Activated CD4-positive, alpha-beta T cell treated with anti-CD3 and anti-CD28 coated beads for 36 hours (primary cell): ENCODE measurements at regions of chr6 and their contacts with region 1.

Region 1: DNA sequence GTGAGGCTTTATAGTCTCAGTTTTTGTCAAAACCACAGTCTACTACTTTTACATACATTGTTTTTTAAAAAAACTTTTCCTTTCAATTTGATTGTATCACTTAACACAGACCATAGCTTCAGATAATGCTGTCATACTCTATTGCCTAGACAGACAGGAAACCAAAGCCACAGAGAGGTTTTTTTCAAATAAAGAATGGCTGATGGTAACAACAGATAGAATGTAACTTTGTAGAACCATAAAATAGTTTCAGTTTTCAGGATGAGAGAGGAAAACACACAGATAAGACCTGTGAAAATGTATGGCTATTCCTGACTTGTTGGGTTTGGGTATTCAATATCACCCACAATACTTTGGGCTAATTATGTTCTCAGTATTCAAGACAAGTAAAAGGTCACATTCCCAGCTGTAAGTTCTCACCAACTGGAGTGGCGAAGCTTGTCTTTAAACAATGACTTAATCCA is 94.0 kb downstream of the ADGRG6 start:
- DNase-seq: no peak
- ATAC-seq: peak; percentile 97
- H3K4me3 Mint-ChIP-seq: no peak overlapping the region
- H3K27ac Mint-ChIP-seq: peak overlapping the region; percentile 33
- H3K4me1 Mint-ChIP-seq: peaks cover 32% of the 10 kb centered on the region
- H3K27me3 Mint-ChIP-seq: peaks cover 11% of the 10 kb centered on the region

Region 2: GRCh38 chr6:142013286-142013685 is 382.5 kb before region 1 on chr6:
- CTCF ChIA-PET with region 1: no interaction called
- POLR2A ChIA-PET with region 1: no interaction called
- intact Hi-C with region 1: loop called in 1 of 2 experiments (anchors 5 kb)
- DNase-seq: no peak
- ATAC-seq: peak; percentile 96
- H3K4me3 Mint-ChIP-seq: no peak overlapping the region
- H3K27ac Mint-ChIP-seq: no peak overlapping the region
- H3K4me1 Mint-ChIP-seq: peaks cover 18% of the 10 kb centered on the region
- H3K27me3 Mint-ChIP-seq: peaks cover 28% of the 10 kb centered on the region

Region 3: DNA sequence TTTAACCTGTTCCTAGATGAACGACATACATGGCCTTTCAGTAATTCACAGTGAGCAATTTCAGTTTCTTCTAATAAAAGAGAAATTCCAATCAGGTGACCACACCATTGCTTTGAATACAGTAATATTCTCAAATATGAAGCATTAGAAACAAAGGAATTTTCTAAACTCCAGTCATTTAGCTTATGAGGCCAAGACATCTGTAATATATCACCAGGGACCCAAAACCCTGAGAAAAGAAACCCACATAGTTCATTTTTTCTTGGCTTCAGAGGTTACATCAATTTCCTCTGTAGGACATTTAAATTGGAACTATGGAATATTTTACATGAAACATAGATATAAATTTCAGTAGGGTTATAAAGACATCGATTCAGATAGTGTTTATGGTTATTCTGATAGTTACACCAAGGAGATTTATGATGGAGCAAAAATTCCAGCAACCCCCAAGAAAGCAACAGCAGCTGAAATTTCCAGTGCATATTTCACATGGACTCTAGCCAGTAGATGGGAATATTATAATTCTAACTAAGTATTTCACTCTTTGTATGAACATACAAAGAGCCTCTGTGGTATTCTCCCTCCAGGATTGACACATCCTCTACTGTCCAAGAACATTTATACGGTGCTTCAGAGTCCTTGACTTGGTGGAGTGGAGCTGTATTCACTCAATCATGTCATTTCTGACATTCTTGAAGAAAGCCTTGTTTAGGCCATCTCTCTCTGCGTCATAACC is 11.1 kb before region 1 on chr6:
- CTCF ChIA-PET with region 1: no interaction called
- POLR2A ChIA-PET with region 1: no interaction called
- intact Hi-C with region 1: no loop called
- DNase-seq: no peak
- ATAC-seq: no peak
- H3K4me3 Mint-ChIP-seq: no peak overlapping the region
- H3K27ac Mint-ChIP-seq: no peak overlapping the region
- H3K4me1 Mint-ChIP-seq: no peaks in the 10 kb centered on the region
- H3K27me3 Mint-ChIP-seq: no peaks in the 10 kb centered on the region

Region 4: DNA sequence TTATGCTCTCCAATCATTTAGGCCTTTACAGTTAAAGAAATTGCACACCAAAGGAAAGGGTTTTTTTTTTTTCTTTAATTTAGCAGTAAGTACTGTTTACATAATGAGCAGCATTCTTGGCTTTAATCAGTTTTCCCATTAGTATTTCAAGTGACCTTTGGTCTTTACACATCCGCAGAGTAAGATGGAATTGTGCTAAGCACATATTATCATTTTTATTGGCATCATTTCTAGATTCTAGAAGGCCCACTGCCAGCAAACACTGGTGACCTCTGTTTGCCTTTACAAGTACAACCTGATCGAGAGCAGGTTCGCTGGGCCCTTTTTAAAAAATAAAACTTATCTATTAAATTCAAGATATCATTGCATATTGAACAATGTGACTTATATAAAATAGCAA is 10.3 kb after region 1 on chr6:
- CTCF ChIA-PET with region 1: interaction called, 4 read pairs
- POLR2A ChIA-PET with region 1: no interaction called
- intact Hi-C with region 1: loop called in 1 of 2 experiments (anchors 1 kb)
- DNase-seq: no peak
- ATAC-seq: no peak
- H3K4me3 Mint-ChIP-seq: no peak overlapping the region
- H3K27ac Mint-ChIP-seq: no peak overlapping the region
- H3K4me1 Mint-ChIP-seq: peaks cover 30% of the 10 kb centered on the region
- H3K27me3 Mint-ChIP-seq: peaks cover 7% of the 10 kb centered on the region

Region 5: DNA sequence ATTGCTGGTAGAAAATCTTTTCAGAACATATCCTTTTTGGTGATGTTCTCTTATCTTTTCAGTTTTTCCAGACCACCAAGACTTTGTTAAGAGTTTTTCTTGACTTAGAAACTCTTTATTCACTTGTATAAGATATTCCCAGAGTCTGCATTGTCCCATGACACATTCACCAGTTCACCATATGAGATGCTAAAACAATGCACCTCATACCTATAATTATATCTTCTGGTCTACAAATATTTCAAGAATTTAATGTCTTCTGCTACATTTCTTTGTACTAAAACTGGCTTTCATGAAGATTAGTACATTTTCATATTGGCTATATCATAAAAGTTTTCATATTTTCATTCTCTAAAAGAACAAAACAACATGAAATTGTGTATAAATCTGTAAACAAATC is 17.3 kb after region 1 on chr6:
- CTCF ChIA-PET with region 1: no interaction called
- POLR2A ChIA-PET with region 1: no interaction called
- intact Hi-C with region 1: loop called (anchors 1 to 2 kb)
- DNase-seq: no peak
- ATAC-seq: no peak
- H3K4me3 Mint-ChIP-seq: no peak overlapping the region
- H3K27ac Mint-ChIP-seq: no peak overlapping the region
- H3K4me1 Mint-ChIP-seq: peaks cover 39% of the 10 kb centered on the region
- H3K27me3 Mint-ChIP-seq: peaks cover 14% of the 10 kb centered on the region

Region 6: DNA sequence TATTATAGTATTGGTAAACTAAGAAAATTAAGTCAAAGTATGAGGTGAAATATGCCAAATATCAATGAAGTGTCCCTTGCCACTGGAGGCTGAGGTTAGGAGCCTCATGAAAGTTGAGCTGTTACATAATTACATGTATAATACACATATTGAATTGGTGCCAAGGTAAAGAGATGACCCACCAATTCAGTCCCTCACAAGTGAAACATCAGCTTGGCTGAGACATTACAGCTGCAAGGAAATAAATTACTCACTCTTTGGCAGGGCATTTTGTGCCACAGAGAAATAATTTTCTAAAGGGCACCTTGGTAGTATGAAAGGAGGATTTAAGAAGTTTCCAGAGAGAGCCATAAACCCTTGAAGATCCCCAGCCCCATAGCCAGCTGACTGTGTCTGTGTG is 33.4 kb after region 1 on chr6:
- CTCF ChIA-PET with region 1: no interaction called
- POLR2A ChIA-PET with region 1: no interaction called
- intact Hi-C with region 1: no loop called
- DNase-seq: no peak
- ATAC-seq: no peak
- H3K4me3 Mint-ChIP-seq: no peak overlapping the region
- H3K27ac Mint-ChIP-seq: no peak overlapping the region
- H3K4me1 Mint-ChIP-seq: no peaks in the 10 kb centered on the region
- H3K27me3 Mint-ChIP-seq: no peaks in the 10 kb centered on the region

Region 7: DNA sequence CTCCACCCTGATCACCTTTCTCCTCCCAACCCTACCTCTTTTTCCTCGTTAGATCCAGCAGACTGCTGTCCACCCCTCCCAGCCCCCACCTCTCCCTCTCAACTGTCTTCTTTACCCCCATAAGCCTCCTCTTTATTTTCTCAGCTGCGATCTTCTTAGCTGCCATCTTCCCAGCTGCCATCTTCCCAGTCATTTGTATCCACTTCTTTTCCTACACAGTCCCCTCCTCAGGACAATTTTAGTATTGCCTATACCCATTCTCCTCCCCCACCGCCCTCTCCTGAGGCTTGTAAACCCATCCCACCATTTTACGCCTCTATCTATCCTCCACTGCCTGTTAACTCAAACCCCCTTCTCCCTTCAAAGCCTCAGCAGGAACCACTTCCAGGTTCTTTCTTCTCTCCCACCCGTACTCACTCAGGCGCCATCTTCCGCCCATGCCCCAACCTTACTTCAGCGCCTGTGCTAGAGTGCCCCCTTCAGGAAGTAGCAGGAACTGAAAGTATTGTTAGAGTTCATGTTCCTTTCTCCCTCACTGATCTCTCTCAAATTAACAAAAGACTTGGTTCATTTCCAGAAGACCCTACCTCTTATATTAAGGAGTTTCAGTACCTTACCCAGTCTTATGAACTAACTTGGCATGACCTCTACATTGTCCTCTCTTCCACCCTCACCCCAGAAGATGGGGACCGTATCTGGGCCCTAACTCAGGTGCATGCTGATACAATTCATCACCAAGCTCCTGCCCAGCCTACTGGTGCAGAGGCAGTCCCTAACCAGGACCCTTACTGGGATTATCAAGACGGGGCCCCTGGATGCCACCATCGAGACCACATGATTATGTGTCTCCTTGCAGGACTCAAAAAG is 142.0 kb after region 1 on chr6:
- CTCF ChIA-PET with region 1: no interaction called
- POLR2A ChIA-PET with region 1: no interaction called
- intact Hi-C with region 1: loop called in 1 of 2 experiments (anchors 5 kb)
- DNase-seq: peak; percentile 52
- ATAC-seq: no peak
- H3K4me3 Mint-ChIP-seq: no peak overlapping the region
- H3K27ac Mint-ChIP-seq: no peak overlapping the region
- H3K4me1 Mint-ChIP-seq: peaks cover 2% of the 10 kb centered on the region
- H3K27me3 Mint-ChIP-seq: no peaks in the 10 kb centered on the region